Left colon (tissue), 2 donors: ENCODE measurements at regions of chr6 and their contacts with region 1.

Region 1: GRCh38 chr6:11770546-11771466 is 7.8 kb downstream of the ADTRP start:
- DNase-seq: peak; percentile 87 to 93
- ATAC-seq: peak; percentile 94

Region 2: GRCh38 chr6:11654876-11655275 is 115.9 kb before region 1 on chr6:
- intact Hi-C with region 1: no loop called
- DNase-seq: no peak
- ATAC-seq: no peak

Region 3: DNA sequence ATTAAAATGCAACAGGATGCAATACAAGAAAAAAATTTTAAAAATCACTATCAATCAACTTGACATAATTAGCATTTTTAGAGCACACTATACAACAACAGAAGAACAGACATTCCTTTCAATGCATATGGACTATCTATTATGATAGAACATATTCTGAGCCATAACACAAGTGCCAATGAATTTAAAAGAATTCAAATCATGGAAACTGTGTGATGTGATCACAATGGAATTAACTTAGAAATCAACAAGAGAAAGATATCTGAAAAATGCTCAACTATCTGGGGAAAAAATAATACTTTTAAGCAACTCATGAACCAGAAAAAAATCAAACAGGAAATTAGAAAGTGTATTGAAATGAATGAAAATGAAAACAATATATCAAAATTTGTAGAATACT is 98.5 kb before region 1 on chr6:
- intact Hi-C with region 1: no loop called
- DNase-seq: no peak
- ATAC-seq: no peak

Region 4: GRCh38 chr6:11824986-11825385 is 54.2 kb after region 1 on chr6:
- intact Hi-C with region 1: no loop called
- DNase-seq: no peak
- ATAC-seq: no peak

Region 5: GRCh38 chr6:12011276-12012076 is 240.7 kb after region 1 on chr6:
- intact Hi-C with region 1: loop called in 1 of 2 experiments (anchors 5 kb)
- DNase-seq: peak; percentile 97 to 98
- ATAC-seq: peak; percentile 76